ENCODE measurements at regions of chr5 and their contacts with region 1.

Region 1: GRCh38 chr5:180328296-180329137 is 24.6 kb downstream of the GFPT2 start:
- DNase-seq: peak; percentile 88
- ATAC-seq: peak; percentile 96
- H3K4me3 Mint-ChIP-seq: no peak overlapping the region
- H3K27ac Mint-ChIP-seq: no peak overlapping the region
- H3K4me1 Mint-ChIP-seq: peaks cover 3% of the 10 kb centered on the region
- H3K27me3 Mint-ChIP-seq: peaks cover 14% of the 10 kb centered on the region

Region 2: GRCh38 chr5:180084688-180085561 is 243.6 kb before region 1 on chr5:
- CTCF ChIA-PET with region 1: no interaction called
- DNase-seq: no peak
- ATAC-seq: no peak
- H3K4me3 Mint-ChIP-seq: no peak overlapping the region
- H3K27ac Mint-ChIP-seq: no peak overlapping the region
- H3K4me1 Mint-ChIP-seq: peaks cover 19% of the 10 kb centered on the region
- H3K27me3 Mint-ChIP-seq: peaks cover 26% of the 10 kb centered on the region

Region 3: DNA sequence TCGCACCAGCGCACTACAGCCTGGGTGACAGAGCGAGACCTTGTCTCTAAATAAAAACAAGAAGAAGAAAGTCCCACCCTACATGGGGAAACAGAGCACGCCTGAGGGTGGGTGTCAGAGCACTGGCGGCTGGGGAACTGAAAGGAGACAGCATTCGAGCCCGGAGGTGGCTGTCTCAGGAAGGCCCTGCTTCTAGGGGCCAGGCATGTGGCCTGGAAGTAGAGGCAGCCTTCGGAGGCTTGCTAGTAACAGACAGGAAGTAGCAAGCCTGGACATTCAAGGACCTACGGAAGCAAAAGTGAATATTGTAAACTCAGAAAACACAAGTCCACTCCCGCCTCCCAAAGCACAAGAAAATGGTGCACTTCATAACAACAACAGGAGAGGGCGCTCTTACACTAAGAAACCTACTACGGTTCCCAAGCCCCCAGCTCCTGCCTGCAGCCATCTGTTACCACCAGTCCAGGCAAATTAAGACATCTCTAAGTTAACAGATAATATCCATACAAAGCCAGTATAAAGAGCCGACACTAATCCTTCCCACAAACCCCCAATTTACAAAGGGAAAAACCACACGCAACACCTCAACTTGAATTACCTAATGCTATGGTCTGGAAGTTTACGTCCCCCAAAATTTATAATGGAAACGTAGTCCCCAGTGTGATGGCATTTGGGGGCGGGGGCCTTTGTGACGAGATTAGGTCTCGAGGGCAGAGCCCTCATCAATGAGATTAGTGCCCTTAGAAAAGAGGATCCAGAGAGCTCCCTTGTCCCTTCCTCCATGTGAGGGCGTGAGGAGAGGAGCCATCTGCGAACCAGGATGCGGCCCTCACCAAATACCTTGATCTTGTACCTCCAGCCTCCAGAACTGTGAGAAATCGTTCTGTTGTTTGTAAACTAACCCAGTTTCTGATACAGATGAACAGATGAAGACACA is 127.2 kb before region 1 on chr5:
- CTCF ChIA-PET with region 1: interaction called, 12 read pairs
- DNase-seq: no peak
- ATAC-seq: no peak
- H3K4me3 Mint-ChIP-seq: no peak overlapping the region
- H3K27ac Mint-ChIP-seq: no peak overlapping the region
- H3K4me1 Mint-ChIP-seq: no peaks in the 10 kb centered on the region
- H3K27me3 Mint-ChIP-seq: peaks cover 8% of the 10 kb centered on the region

Region 4: GRCh38 chr5:180209137-180209581 is 119.4 kb before region 1 on chr5 and contains the start of gene RASGEF1C:
- CTCF ChIA-PET with region 1: interaction called, 11 read pairs
- DNase-seq: peak; percentile 58
- ATAC-seq: peak; percentile 94
- H3K4me3 Mint-ChIP-seq: no peak within 1 kb of the TSS
- H3K27ac Mint-ChIP-seq: no peak within 1 kb of the TSS
- H3K4me1 Mint-ChIP-seq: peaks cover 10% of the 10 kb centered on the region
- H3K27me3 Mint-ChIP-seq: peaks cover 28% of the 10 kb centered on the region
- total RNA-seq, gene RASGEF1C: not detected

Region 5: DNA sequence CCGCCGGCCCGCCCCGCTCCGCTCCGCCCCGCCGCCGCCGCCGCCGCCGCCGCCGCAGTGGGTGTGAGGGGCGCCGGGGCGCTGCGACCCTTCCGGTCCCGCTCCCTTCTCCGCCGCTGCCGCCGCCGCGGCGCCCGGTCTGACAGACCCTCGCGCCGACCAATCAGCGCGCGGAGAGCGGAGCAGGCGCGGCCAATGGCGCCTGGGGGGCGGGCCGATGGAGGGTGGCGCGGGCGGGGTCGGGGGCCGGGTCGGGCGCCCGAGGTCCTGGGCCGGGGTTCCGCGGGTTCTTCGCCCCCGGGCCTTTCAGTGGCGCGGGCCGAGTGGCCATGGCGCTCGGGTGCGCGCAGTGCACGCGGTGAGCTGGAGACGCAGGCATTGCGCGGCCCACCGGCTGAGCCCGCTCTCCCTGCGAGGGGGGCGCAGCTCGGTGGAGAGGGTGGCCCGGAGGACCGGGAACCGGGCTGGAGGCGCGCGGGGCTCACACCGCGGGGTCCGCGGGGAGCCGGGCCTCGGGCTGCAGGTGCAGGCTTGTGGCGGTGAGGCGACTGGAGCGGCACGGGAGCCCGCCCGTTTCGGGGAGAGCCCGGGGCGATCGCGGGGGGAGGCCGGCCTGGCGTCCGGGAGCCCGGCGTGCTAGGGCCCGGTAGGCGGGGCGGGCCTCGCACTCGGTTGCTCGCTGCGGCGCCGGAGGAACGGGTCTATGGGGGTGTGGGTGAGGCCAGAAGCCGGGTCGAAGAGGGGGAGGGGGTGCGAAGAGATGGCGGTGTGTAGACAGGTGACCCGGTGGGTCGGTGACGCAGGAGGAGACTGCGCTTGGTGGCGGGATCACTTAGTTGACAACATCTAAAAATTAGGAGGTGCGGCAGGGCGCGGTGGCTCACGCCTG is 36.3 kb before region 1 on chr5 and contains the start of gene MAPK9:
- CTCF ChIA-PET with region 1: interaction called, 95 read pairs
- DNase-seq: peak; percentile 87
- ATAC-seq: peak; percentile 86
- H3K4me3 Mint-ChIP-seq: peak within 1 kb of the TSS; percentile 93
- H3K27ac Mint-ChIP-seq: peak within 1 kb of the TSS; percentile 98
- H3K4me1 Mint-ChIP-seq: peaks cover 23% of the 10 kb centered on the region
- H3K27me3 Mint-ChIP-seq: no peaks in the 10 kb centered on the region
- total RNA-seq, gene MAPK9: 40.9 to 44.4 TPM

Region 6: DNA sequence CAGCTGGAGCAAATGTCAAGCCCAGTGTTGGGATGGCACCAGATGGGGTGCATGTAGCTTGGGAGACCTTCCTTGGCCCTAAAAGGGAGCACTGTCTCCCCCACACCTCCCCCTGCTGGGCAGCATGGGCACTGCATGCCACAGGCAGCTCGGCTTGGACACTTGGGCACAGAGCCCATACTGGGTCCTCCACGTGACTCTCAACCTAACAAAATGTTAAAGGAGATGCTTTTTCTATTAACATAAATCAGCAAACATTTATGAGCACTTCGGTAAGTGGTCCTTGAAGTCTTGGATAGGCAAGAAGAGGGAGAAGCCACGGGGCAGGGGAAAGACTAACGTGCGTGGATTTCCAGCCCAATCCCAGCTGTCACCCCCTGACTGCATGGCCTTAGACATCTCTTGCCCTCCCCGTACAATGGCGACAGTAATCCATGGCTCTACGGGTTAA is 12.7 kb before region 1 on chr5:
- CTCF ChIA-PET with region 1: interaction called, 58 read pairs
- DNase-seq: peak; percentile 77
- ATAC-seq: peak; percentile 52
- H3K4me3 Mint-ChIP-seq: no peak overlapping the region
- H3K27ac Mint-ChIP-seq: no peak overlapping the region
- H3K4me1 Mint-ChIP-seq: peaks cover 4% of the 10 kb centered on the region
- H3K27me3 Mint-ChIP-seq: no peaks in the 10 kb centered on the region

Region 7: DNA sequence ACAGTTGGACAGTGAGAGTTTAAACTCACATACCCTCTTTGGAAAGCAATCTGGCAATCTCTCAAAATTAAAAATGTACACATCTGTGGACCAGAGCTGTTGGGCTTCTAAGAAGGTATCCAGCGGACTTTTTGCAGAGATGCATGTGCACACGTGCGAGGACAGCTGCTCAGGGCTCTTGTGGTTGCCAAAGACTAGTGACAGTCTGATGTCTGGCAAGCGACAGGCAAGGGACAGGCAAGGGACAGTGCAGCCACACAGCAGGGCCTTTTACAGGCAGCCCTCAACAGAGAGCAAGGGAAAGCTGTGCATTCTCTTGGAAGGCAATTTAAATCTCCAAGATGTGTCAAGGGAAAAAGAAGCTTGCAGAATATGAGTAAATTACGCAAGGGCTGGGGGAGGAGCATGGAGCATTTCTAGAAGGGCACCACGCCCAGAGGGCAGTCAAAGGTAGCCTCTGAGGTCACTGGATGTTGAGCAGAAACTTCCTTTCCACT is 15.4 kb after region 1 on chr5:
- CTCF ChIA-PET with region 1: interaction called, 24 read pairs
- DNase-seq: peak; percentile 38
- ATAC-seq: no peak
- H3K4me3 Mint-ChIP-seq: no peak overlapping the region
- H3K27ac Mint-ChIP-seq: no peak overlapping the region
- H3K4me1 Mint-ChIP-seq: no peaks in the 10 kb centered on the region
- H3K27me3 Mint-ChIP-seq: peaks cover 10% of the 10 kb centered on the region

Region 8: GRCh38 chr5:180470966-180471582 is 142.6 kb after region 1 on chr5:
- CTCF ChIA-PET with region 1: interaction called, 20 read pairs
- DNase-seq: peak; percentile 66
- ATAC-seq: peak; percentile 83
- H3K4me3 Mint-ChIP-seq: no peak overlapping the region
- H3K27ac Mint-ChIP-seq: no peak overlapping the region
- H3K4me1 Mint-ChIP-seq: no peaks in the 10 kb centered on the region
- H3K27me3 Mint-ChIP-seq: peaks cover 19% of the 10 kb centered on the region

Region 9: DNA sequence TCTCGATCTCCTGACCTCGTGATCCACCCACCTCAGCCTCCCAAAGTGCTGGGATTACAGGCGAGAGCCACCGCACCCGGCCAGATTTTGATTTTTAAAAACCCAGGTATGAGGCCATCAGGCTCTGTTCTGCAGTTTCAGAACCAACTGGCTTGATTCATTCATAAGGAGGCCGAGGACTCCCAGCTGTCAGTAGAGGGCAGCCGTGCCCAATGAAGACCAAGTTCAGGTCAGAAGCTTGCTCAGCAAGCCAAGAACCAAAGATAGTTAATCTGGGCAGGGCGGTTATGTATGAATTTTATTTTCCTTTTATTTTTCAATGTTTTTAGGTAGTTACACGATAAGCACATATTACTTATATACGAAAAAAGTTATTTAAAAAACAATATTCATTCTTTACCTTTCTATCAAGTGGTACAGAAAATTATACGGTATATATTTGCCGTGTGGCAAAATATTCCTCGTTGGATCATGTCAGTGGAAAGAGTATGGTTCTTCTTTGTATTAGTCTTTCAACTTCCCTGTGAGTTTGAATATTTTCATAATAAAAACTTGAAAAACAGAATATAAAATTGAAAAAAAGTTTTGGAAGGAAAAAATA is 456.1 kb after region 1 on chr5:
- CTCF ChIA-PET with region 1: no interaction called
- DNase-seq: peak; percentile 83
- ATAC-seq: peak; percentile 77
- H3K4me3 Mint-ChIP-seq: no peak overlapping the region
- H3K27ac Mint-ChIP-seq: no peak overlapping the region
- H3K4me1 Mint-ChIP-seq: peaks cover 11% of the 10 kb centered on the region
- H3K27me3 Mint-ChIP-seq: no peaks in the 10 kb centered on the region

Measured in activated CD8-positive, alpha-beta memory T cell treated with anti-CD3 and anti-CD28 coated beads, Interleukin-2, amount 10 ng/mL, durations not matched to agents 7 days and 5 days (primary cell).